Esophagus squamous epithelium (tissue), 5 donors: ENCODE measurements at regions of chr1 and their contacts with region 1.

Region 1: DNA sequence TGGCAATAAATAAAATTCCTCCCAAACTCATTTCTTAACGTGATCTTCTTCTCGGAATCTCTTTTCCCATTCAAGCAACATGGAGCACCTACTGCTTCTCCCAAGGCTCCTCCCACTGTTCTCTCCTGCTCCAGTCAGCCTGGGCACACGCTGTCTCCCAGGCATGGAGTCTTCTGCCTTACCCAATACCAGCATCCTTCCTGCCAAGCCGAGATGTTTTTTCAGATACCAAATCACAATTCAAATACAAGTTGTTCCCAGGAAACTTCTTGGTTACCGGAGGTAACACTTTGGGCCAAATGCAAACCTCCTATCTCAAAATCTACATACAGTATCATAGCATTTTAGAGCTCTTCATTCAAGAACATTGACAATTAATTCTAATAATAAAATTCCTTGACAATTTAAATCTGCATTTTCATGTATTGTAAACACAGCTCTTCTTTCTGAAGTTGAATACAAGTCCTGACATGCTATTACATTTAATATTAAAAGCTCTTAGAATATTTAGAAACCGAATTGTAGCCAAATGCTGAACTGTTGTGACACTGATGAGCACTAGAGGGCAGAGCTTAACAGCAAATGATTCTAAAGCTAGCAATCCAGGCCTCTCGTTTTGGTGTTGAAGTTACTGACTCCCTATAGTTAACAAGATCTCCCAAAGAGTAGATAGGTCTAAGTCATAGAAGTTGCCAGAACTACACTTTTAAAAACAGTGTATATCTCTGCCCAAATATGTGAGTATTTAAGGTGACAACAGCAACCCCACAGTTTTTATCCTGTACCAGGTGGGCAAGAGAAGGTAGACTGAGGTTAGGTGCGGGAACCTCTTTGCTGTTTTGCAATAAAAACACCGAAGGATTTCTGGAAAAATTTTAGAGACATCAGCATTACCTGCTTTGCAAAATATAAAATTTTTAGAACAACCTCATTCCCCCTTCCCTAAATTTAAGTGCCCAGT is 52.3 kb downstream of the BCAR3 start:
- DNase-seq: no peak
- H3K4me3 ChIP-seq: no peak overlapping the region
- H3K27ac ChIP-seq: no peak overlapping the region
- H3K4me1 ChIP-seq: peaks cover 0 to 17% (median 0%) of the 10 kb centered on the region in 3 donors
- H3K27me3 ChIP-seq: no peaks in the 10 kb centered on the region
- CTCF ChIP-seq: peak; percentile 68 to 90 (median 84)
- POLR2A ChIP-seq: no peak

Region 2: GRCh38 chr1:93471911-93472310 is 157.5 kb before region 1 on chr1:
- intact Hi-C with region 1: no loop called
- DNase-seq: no peak
- H3K4me3 ChIP-seq: no peak overlapping the region
- H3K27ac ChIP-seq: no peak overlapping the region
- H3K4me1 ChIP-seq: peaks cover 0 to 14% (median 6%) of the 10 kb centered on the region in 3 donors
- H3K27me3 ChIP-seq: no peaks in the 10 kb centered on the region
- CTCF ChIP-seq: no peak
- POLR2A ChIP-seq: no peak

Region 3: GRCh38 chr1:93814059-93814794 is 184.8 kb after region 1 on chr1:
- intact Hi-C with region 1: loop called (anchors 5 kb)
- DNase-seq: no peak
- H3K4me3 ChIP-seq: no peak overlapping the region
- H3K27ac ChIP-seq: no peak overlapping the region
- H3K4me1 ChIP-seq: peaks cover 0 to 44% (median 0%) of the 10 kb centered on the region in 3 donors
- H3K27me3 ChIP-seq: no peaks in the 10 kb centered on the region
- CTCF ChIP-seq: peak; percentile 64 to 98 (median 93)
- POLR2A ChIP-seq: no peak